H1 (cell line): ENCODE measurements at regions of chr16 and their contacts with region 1.

Region 1: GRCh38 chr16:67942200-67942509 is 1.8 kb downstream of the LCAT start:
- DNase-seq: peak; percentile 49 to 77
- H3K4me3 ChIP-seq: no peak overlapping the region
- H3K27ac ChIP-seq: no peak overlapping the region
- H3K4me1 ChIP-seq: peaks cover 0 to 2% (median 0%) of the 10 kb centered on the region in 4 experiments; a peak in 3 of 7 replicates
- H3K27me3 ChIP-seq: no peaks in the 10 kb centered on the region
- CTCF ChIP-seq: peak; percentile 84 to 99 (median 96)
- EP300 ChIP-seq: no peak
- POLR2A ChIP-seq: no peak
- RAD21 ChIP-seq: peak; percentile 71 to 80

Region 2: GRCh38 chr16:67865316-67865715 is 76.8 kb before region 1 on chr16:
- CTCF ChIA-PET with region 1: interaction called, 11 read pairs
- POLR2A ChIA-PET with region 1: no interaction called
- DNase-seq: no peak
- H3K4me3 ChIP-seq: no peak overlapping the region
- H3K27ac ChIP-seq: no peak overlapping the region
- H3K4me1 ChIP-seq: peaks cover 0 to 4% (median 0%) of the 10 kb centered on the region in 4 experiments; a peak in 2 of 7 replicates
- H3K27me3 ChIP-seq: no peaks in the 10 kb centered on the region
- CTCF ChIP-seq: peak; percentile 76 to 83 (median 79)
- EP300 ChIP-seq: no peak
- POLR2A ChIP-seq: no peak
- RAD21 ChIP-seq: peak; percentile 80 to 82

Region 3: GRCh38 chr16:67923414-67924116 is 18.6 kb before region 1 on chr16:
- CTCF ChIA-PET with region 1: interaction called, 21 read pairs
- POLR2A ChIA-PET with region 1: interaction called, 31 read pairs
- DNase-seq: no peak
- H3K4me3 ChIP-seq: no peak overlapping the region
- H3K27ac ChIP-seq: 0 out of 2 replicates have a peak overlapping the region, but pooled peaks have one; percentile 21
- H3K4me1 ChIP-seq: peaks cover 0 to 8% (median 4%) of the 10 kb centered on the region in 4 experiments; a peak in 5 of 7 replicates
- H3K27me3 ChIP-seq: no peaks in the 10 kb centered on the region
- CTCF ChIP-seq: no peak
- EP300 ChIP-seq: no peak
- POLR2A ChIP-seq: no peak
- RAD21 ChIP-seq: no peak

Region 4: DNA sequence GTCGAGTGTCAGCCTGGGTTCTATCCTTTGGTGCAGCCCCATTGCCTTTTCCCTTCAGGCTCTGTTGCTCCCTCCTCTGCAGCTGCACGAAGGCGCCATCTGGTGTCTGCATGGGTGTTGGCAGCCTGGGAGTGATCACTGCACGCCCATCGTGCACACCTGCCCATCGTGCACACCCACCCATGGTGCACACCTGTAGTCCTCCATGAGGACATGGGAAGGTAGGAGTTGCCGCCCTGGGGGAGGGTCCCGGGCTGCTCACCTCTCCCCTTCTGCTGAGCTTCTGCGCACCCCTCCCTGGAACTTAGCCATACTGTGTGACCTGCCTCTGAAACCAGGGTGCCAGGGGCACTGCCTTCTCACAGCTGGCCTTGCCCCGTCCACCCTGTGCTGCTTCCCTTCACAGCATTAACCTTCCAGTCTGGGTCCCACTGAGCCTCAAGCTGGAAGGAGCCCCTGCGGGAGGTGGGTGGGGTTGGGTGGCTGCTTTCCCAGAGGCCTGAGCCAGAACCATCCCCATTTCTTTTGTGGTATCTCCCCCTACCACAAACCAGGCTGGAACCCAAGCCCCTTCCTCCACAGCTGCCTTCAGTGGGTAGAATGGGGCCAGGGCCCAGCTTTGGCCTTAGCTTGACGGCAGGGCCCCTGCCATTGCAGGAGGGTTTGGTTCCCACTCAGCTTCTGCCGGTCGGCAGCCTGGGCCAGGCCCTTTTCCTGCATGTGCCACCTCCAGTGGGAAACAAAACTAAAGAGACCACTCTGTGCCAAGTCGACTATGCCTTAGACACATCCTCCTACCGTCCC is 13.4 kb before region 1 on chr16:
- CTCF ChIA-PET with region 1: interaction called, 27 read pairs
- POLR2A ChIA-PET with region 1: interaction called, 47 read pairs
- DNase-seq: peak in 1 of 2 experiments; percentile 91
- H3K4me3 ChIP-seq: no peak overlapping the region
- H3K27ac ChIP-seq: no peak overlapping the region
- H3K4me1 ChIP-seq: peaks cover 0 to 8% (median 4%) of the 10 kb centered on the region in 4 experiments; a peak in 5 of 7 replicates
- H3K27me3 ChIP-seq: no peaks in the 10 kb centered on the region
- CTCF ChIP-seq: peak; percentile 96 to 100 (median 96)
- EP300 ChIP-seq: no peak
- POLR2A ChIP-seq: no peak
- RAD21 ChIP-seq: peak; percentile 94